Right ventricle myocardium inferior (tissue), 1 donor: ENCODE measurements at regions of chr9 and their contacts with region 1.

Region 1: GRCh38 chr9:114155263-114155972 is at the start of gene COL27A1:
- DNase-seq: peak; percentile 90
- ATAC-seq: peak; percentile 90
- total RNA-seq, gene COL27A1: 9.8 TPM

Region 2: GRCh38 chr9:114108016-114108833 is 47.2 kb before region 1 on chr9:
- intact Hi-C with region 1: loop called (anchors 1 kb)
- DNase-seq: peak; percentile 84
- ATAC-seq: peak; percentile 94

Region 3: DNA sequence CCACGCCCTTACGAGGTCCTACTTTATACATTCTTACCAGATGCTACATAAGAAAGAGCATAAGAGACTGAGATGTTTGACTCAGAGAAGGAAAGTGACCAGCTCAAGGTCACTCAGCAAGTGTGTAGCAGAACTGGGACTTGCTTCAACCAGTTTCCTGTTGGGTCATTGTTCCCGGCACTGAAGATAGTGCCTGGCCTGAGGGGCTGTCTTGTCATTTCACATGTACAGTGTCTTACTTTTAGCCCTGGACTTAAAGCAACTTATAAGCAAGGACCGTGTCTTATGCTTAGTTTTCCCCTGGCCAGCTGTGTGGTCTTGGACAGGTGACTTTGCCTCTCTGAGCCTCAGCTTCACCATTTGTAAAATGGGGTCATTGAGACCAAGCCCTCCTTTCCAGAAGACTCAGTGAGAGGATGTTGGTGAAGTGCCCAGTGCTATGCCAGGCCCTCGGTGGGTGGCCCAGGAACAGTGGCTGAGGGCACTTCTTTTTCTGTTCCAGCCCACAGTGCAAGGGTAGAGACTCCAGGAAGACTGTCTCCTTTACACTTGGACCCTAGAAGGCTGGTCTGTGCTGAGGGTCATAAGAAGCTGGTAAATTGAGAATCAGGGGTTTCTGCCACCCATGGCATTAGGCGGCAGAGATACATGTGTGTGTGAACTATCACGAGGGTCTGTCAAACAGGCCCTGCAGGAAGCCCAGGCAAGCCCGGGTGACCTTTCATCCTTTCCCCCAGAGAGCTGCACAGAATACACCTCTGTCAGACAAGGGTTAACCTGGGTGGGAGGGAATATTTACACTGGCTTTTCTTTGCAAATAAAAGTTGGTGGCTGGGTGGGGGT is 36.2 kb before region 1 on chr9:
- intact Hi-C with region 1: no loop called
- DNase-seq: no peak
- ATAC-seq: no peak

Region 4: DNA sequence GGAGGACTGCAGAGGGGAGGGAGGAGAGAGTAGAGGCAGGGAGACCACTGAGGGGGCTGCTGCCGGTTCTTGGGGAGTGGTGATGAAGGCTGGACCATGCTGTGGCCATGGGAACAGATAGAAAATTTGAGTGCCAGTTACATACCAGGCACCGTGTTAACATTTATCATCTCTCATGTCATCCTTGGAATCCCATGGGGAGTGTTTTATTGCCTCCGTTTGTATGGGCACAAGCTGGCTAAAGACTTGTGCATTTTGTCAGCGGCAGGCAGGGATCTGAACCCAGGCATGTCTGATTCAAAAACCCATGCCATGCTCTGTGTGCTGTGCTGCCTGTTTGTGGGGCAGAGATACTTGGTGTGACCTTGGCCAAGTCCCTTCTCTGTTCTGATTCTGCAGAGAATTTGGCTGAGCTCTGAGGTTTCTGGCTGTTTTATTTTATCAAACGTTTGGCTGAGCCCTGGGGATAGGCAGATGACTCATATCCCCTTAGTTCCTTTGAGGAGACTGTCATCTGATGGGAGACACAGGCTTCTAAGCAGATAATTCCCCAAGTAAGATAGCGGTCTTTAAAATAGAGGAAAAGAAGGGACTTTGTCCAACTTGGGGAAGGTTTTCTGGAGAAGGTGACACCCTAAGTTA is 22.1 kb after region 1 on chr9:
- intact Hi-C with region 1: loop called (anchors 2 kb)
- DNase-seq: no peak
- ATAC-seq: no peak

Region 5: GRCh38 chr9:114238891-114239875 is 83.8 kb after region 1 on chr9:
- intact Hi-C with region 1: loop called (anchors 2 kb)
- DNase-seq: peak; percentile 65
- ATAC-seq: peak; percentile 70

Region 6: DNA sequence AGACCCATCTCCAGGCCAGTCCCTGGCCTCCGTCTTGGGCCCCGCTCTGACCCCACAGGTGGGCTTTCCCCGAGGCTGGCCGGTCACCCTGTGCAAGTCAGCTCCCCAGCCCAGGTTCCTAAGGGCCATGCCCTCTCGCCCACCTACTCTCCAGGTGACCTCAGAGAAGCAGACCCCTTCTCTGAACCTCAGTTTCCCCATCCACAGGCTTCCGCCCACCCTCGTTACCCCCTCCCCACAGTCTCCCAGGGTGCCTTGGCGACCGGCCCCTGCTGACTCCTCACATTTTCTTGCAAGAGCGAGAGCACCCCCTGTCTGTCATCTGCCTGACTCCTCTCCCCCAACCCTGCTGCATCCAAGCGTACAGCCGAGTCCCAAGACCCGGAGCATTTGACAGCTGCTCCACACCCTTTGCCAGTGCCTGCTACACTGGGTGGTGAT is 116.2 kb after region 1 on chr9:
- intact Hi-C with region 1: loop called (anchors 2 kb)
- DNase-seq: no peak
- ATAC-seq: peak; percentile 66

Region 7: DNA sequence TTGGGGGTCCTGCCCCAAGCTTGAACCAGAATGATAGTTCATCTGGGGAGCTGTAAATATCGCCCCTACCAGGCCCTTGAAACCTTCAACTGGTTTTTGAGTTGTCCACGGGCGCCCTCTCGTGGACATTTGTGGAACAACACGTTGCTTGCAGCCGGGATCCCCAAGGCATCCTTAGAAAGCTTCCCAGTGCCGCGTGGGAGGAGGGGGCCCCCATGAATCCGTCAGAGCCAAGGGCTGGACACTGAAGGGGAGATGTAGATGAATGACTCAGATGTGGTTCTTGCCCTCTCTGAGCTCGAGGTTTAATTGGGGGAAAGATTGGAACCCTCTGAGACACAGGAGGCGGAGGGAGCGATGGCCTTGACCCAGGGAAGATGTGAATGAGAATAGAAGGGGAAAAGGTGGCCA is 135.7 kb after region 1 on chr9:
- intact Hi-C with region 1: loop called (anchors 1 kb)
- DNase-seq: peak; percentile 87
- ATAC-seq: peak; percentile 58